SK-N-SH (cell line): ENCODE measurements at regions of chr11 and their contacts with region 1.

Region 1: DNA sequence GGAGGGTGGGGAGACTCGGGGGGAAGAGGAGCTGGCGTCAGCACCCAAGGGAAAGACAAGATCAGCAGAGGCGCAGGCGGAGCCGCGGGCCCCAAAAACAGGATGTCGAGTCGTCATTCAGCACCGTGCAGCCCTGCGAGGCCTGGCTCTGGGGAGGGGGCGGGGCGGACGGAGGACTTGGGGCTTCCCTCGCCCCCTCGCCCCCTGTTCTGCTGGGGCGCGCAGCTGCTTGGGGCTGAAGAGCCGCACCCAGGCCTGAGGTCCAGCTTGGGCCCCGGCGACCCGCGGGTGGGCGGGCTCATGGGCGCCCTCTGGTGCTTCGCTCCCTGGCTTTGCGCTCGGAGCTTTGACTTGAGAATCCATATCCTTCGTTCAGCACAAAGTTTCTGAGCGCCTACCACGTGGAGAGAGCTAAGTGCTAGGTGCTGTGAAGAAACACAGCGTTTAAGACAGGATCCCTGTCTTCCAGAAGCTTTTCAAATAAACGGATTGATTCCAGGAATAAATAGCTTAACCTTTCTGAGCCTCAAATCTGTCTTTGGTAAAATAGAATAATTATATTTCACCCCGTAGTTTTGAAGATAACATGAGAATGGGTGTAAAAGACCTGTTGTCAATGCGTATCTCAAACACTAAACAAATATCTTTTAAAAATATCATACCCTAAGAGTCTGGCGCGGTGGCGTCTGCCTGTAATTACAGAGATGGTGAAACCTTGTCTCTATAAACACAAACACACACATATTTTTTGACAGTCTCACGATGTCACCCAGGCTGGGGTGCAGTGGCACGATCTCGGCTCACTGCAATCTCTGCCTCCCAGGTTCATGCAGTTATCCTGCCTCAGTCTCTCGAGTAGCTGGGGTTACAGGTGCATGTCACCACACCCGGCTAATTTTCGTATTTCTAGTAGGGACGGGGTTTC is 929 bp upstream of the RHOG start:
- DNase-seq: peak; percentile 87
- H3K4me3 ChIP-seq: peak overlapping the region; percentile 67 to 71
- H3K27ac ChIP-seq: peak overlapping the region; percentile 82 to 84
- H3K4me1 ChIP-seq: peaks cover 5 to 17% of the 10 kb centered on the region in 2 experiments; a peak in 2 of 4 replicates
- H3K27me3 ChIP-seq: no peaks in the 10 kb centered on the region
- CTCF ChIP-seq: peak; percentile 80
- EP300 ChIP-seq: no peak
- RAD21 ChIP-seq: peak; percentile 50

Region 2: GRCh38 chr11:3775736-3776406 is 65.8 kb before region 1 on chr11:
- CTCF ChIA-PET with region 1: no interaction called
- POLR2A ChIA-PET with region 1: no interaction called
- DNase-seq: no peak
- H3K4me3 ChIP-seq: no peak overlapping the region
- H3K27ac ChIP-seq: no peak overlapping the region
- H3K4me1 ChIP-seq: no peaks in the 10 kb centered on the region
- H3K27me3 ChIP-seq: no peaks in the 10 kb centered on the region
- CTCF ChIP-seq: peak; percentile 11; the same call in 1 of the 2 replicates
- EP300 ChIP-seq: no peak
- RAD21 ChIP-seq: no peak

Region 3: GRCh38 chr11:3816668-3817067 is 25.0 kb before region 1 on chr11:
- CTCF ChIA-PET with region 1: interaction called, 10 read pairs
- POLR2A ChIA-PET with region 1: no interaction called
- DNase-seq: no peak
- H3K4me3 ChIP-seq: no peak overlapping the region
- H3K27ac ChIP-seq: no peak overlapping the region
- H3K4me1 ChIP-seq: no peaks in the 10 kb centered on the region
- H3K27me3 ChIP-seq: no peaks in the 10 kb centered on the region
- CTCF ChIP-seq: no peak
- EP300 ChIP-seq: no peak
- RAD21 ChIP-seq: no peak

Region 4: GRCh38 chr11:3907590-3907989 is 65.9 kb after region 1 on chr11:
- CTCF ChIA-PET with region 1: no interaction called
- POLR2A ChIA-PET with region 1: no interaction called
- DNase-seq: no peak
- H3K4me3 ChIP-seq: no peak overlapping the region
- H3K27ac ChIP-seq: no peak overlapping the region
- H3K4me1 ChIP-seq: peaks cover 3 to 12% of the 10 kb centered on the region in 2 experiments; a peak in 2 of 4 replicates
- H3K27me3 ChIP-seq: no peaks in the 10 kb centered on the region
- CTCF ChIP-seq: no peak
- EP300 ChIP-seq: no peak
- RAD21 ChIP-seq: no peak